A673 (cell line): ENCODE measurements at regions of chr6 and their contacts with region 1.

Region 1: DNA sequence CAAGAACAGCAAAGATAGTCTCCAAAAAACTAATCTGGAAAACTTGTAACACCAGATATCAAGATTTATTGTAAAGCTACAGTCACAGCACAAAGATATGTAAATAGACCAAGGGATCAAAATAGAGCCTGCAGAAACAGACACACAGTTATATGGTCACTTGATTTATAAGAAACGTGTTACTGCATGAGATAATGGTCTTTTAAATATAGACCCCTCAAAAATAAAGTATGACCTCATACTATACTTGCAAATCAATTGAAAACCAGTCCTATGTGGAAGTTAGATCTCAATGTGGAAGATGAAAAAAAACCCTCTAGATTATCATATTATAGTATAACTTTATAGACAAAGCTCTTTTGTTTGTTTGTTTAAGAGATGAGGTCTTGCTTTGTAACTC is 247.3 kb upstream of the CNR1 start:
- DNase-seq: no peak
- H3K4me3 ChIP-seq: no peak overlapping the region
- H3K27ac ChIP-seq: no peak overlapping the region
- H3K4me1 ChIP-seq: no peaks in the 10 kb centered on the region
- H3K27me3 ChIP-seq: no peaks in the 10 kb centered on the region
- CTCF ChIP-seq: no peak

Region 2: GRCh38 chr6:88761237-88762031 is 348.0 kb after region 1 on chr6:
- CTCF ChIA-PET with region 1: no interaction called
- POLR2A ChIA-PET with region 1: interaction called, 17 read pairs
- intact Hi-C with region 1: no loop called
- DNase-seq: peak; percentile 42
- H3K4me3 ChIP-seq: no peak overlapping the region
- H3K27ac ChIP-seq: no peak overlapping the region
- H3K4me1 ChIP-seq: no peaks in the 10 kb centered on the region
- H3K27me3 ChIP-seq: no peaks in the 10 kb centered on the region
- CTCF ChIP-seq: peak; percentile 39

Region 3: GRCh38 chr6:89873721-89874120 is 1460.3 kb after region 1 on chr6:
- CTCF ChIA-PET with region 1: no interaction called
- POLR2A ChIA-PET with region 1: interaction called, 18 read pairs
- intact Hi-C with region 1: no loop called
- DNase-seq: no peak
- H3K4me3 ChIP-seq: no peak overlapping the region
- H3K27ac ChIP-seq: no peak overlapping the region
- H3K4me1 ChIP-seq: no peaks in the 10 kb centered on the region
- H3K27me3 ChIP-seq: no peaks in the 10 kb centered on the region
- CTCF ChIP-seq: no peak